Cardiac septum (tissue), 1 donor: ENCODE measurements at regions of chr1 and their contacts with region 1.

Region 1: DNA sequence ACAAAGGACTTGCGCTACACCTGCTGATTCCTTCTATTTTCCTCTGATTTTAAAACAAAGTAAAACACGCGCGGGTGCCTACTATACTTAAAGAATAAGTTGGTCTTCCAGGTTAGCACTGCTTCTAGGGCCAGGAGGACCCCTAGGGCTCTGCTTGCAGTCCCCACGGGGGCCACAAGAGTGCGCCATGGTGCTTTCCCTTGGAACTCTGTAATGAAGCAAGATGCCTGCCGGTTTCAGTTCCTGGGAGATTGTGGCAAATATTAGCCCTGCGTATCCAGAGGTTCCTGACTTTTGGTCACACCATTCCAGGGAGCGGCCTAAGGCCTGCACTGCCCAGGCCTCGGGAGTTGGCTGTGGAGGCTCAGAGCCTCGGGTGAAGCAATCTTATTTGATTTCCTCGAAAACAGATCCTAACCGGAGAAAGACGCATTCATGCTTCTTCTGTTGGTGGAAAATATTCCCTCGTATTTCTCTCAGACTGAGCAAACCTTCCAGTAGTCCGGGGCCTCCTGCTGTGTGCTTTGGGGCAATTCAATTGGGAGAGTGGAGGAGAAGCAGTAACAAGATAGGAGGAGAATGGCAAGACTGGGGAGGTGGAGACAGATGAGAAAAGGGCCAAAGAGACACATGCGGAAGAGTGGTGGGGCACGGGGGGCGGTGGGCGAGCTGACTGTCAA is 25.3 kb downstream of the ADAM30 start:
- DNase-seq: no peak

Region 2: GRCh38 chr1:119948342-119949214 is 77.5 kb after region 1 on chr1:
- intact Hi-C with region 1: loop called (anchors 5 kb)
- DNase-seq: peak; percentile 86